Motor neuron (in vitro differentiated cells): ENCODE measurements at regions of chr16 and their contacts with region 1.

Region 1: DNA sequence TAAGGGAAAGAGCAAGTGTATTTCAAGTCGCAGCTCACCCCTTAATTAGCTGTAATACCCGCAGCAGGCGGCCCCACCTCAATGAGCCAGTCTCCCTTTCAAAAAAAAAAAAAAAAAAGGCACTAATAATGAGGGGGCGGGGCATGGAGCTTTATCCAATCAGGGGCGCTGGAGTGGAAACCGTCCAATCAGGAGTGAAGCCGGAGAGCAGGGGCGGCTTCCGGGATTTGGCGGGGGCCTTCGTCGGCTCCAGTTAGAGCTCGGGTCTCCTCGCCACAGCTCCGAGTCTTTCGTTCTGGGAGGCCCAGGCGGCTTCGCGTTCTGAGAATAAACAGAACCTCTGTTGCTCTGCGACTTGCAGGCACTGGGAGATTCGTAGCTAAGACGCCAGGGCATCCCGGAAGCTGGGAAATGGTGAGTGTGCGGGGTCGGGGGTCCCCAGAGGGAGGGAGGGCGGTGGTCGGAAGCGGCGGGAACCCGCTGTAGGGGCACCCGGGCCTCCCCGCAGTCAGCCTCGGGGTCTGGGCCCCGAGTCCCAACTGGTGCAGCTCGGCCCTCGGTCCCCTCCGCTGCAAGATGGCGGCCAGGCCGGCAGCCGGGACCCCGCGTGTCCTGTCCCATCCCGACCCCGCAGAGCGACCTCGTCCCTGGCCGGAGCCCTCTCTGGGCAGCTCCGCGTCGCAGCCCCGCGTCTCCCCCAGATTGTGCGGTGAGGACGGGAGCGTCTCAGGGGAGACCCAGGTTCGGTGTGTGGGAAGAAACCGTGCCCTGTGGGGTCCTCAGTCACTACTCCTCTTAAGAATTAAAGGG is at the start of gene ZNF267:
- ATAC-seq: peak; percentile 79 to 98 (median 94)
- H3K4me3 ChIP-seq: peak within 1 kb of the TSS; percentile 75 to 95 (median 93)
- H3K27ac ChIP-seq: peak within 1 kb of the TSS; percentile 78 to 85
- H3K4me1 ChIP-seq: peaks cover 16 to 28% of the 10 kb centered on the region in 2 donors
- total RNA-seq, gene ZNF267: 6.1 to 14.5 (median 8.8) TPM

Region 2: GRCh38 chr16:30957456-30958174 is 916.1 kb before region 1 on chr16 and contains the start of gene SETD1A:
- in situ Hi-C with region 1: loop called in 1 of 9 experiments (anchors 25 kb)
- ATAC-seq: peak; percentile 76 to 86 (median 80)
- H3K4me3 ChIP-seq: peak within 1 kb of the TSS; percentile 77 to 99 (median 87)
- H3K27ac ChIP-seq: peak within 1 kb of the TSS; percentile 99 to 100
- H3K4me1 ChIP-seq: peaks cover 6 to 12% of the 10 kb centered on the region in 2 donors
- total RNA-seq, gene SETD1A: 3.5 to 17.0 (median 6.6) TPM

Region 3: GRCh38 chr16:30984669-30985400 is 888.9 kb before region 1 on chr16 and contains the start of gene HSD3B7:
- in situ Hi-C with region 1: loop called in 1 of 9 experiments (anchors 25 kb)
- ATAC-seq: peak; percentile 36 to 90 (median 87)
- H3K4me3 ChIP-seq: peak within 1 kb of the TSS in 2 of 5 donors; percentile 7 to 11
- H3K27ac ChIP-seq: peak within 1 kb of the TSS in 1 of 2 donors; percentile 22
- H3K4me1 ChIP-seq: peaks cover 3 to 11% of the 10 kb centered on the region in 2 donors
- total RNA-seq, gene HSD3B7: 0.67 to 68.7 (median 1.6) TPM

Region 4: GRCh38 chr16:31458844-31459721 is 414.7 kb before region 1 on chr16 and contains the start of gene ARMC5:
- in situ Hi-C with region 1: loop called in 1 of 9 experiments (anchors 25 kb)
- ATAC-seq: peak; percentile 70 to 85 (median 80)
- H3K4me3 ChIP-seq: peak within 1 kb of the TSS; percentile 67 to 87 (median 75)
- H3K27ac ChIP-seq: peak within 1 kb of the TSS; percentile 100
- H3K4me1 ChIP-seq: peaks cover 36 to 39% of the 10 kb centered on the region in 2 donors
- total RNA-seq, gene ARMC5: 7.4 to 12.3 (median 9.4) TPM

Region 5: GRCh38 chr16:31636433-31636832 is 237.3 kb before region 1 on chr16:
- in situ Hi-C with region 1: no loop called
- ATAC-seq: no peak
- H3K4me3 ChIP-seq: no peak overlapping the region
- H3K27ac ChIP-seq: no peak overlapping the region
- H3K4me1 ChIP-seq: no peaks in the 10 kb centered on the region